T-cell (primary cell): ENCODE measurements at regions of chr11 and their contacts with region 1.

Region 1: GRCh38 chr11:35485656-35486322 is 39.6 kb downstream of the PAMR1 start:
- DNase-seq: peak; percentile 7 to 77 (median 59)
- ATAC-seq: peak; percentile 69 to 78 (median 72)
- H3K4me3 ChIP-seq: no peak overlapping the region
- H3K4me3 Mint-ChIP-seq: no peak overlapping the region
- H3K27ac ChIP-seq: no peak overlapping the region
- H3K27ac Mint-ChIP-seq: no peak overlapping the region
- H3K4me1 ChIP-seq: no peaks in the 10 kb centered on the region
- H3K4me1 Mint-ChIP-seq: no peaks in the 10 kb centered on the region
- H3K27me3 ChIP-seq: peaks cover 0 to 17% of the 10 kb centered on the region in 2 experiments
- H3K27me3 Mint-ChIP-seq: peaks cover 44 to 47% of the 10 kb centered on the region in 2 donors

Region 2: GRCh38 chr11:35347921-35348331 is 137.9 kb before region 1 on chr11:
- CTCF ChIA-PET with region 1: no interaction called
- POLR2A ChIA-PET with region 1: interaction called in 1 of 2 experiments, 24 read pairs
- DNase-seq: no peak
- ATAC-seq: no peak
- H3K4me3 ChIP-seq: no peak overlapping the region
- H3K4me3 Mint-ChIP-seq: peak overlapping the region in 1 of 3 donors; percentile 56
- H3K27ac ChIP-seq: no peak overlapping the region
- H3K27ac Mint-ChIP-seq: peak overlapping the region in 1 of 2 donors; percentile 96
- H3K4me1 ChIP-seq: peaks cover 37% of the 10 kb centered on the region in 2 experiments
- H3K4me1 Mint-ChIP-seq: peaks cover 42 to 67% (median 66%) of the 10 kb centered on the region in 3 donors
- H3K27me3 ChIP-seq: no peaks in the 10 kb centered on the region
- H3K27me3 Mint-ChIP-seq: no peaks in the 10 kb centered on the region